Calu3 (cell line): ENCODE measurements at regions of chr3 and their contacts with region 1.

Region 1: GRCh38 chr3:20683910-20684309 is 497.9 kb upstream of the SGO1 start:
- DNase-seq: no peak
- H3K4me3 Mint-ChIP-seq: no peak overlapping the region
- H3K27ac Mint-ChIP-seq: no peak overlapping the region
- H3K4me1 Mint-ChIP-seq: peaks cover 40% of the 10 kb centered on the region
- H3K27me3 Mint-ChIP-seq: no peaks in the 10 kb centered on the region
- CTCF ChIP-seq: no peak

Region 2: GRCh38 chr3:19735111-19735510 is 948.8 kb before region 1 on chr3:
- CTCF ChIA-PET with region 1: no interaction called
- intact Hi-C with region 1: no loop called
- DNase-seq: no peak
- H3K4me3 Mint-ChIP-seq: no peak overlapping the region
- H3K27ac Mint-ChIP-seq: peak overlapping the region; percentile 5
- H3K4me1 Mint-ChIP-seq: peaks cover 21% of the 10 kb centered on the region
- H3K27me3 Mint-ChIP-seq: no peaks in the 10 kb centered on the region
- CTCF ChIP-seq: no peak

Region 3: GRCh38 chr3:20924646-20925385 is 240.9 kb after region 1 on chr3:
- CTCF ChIA-PET with region 1: no interaction called
- intact Hi-C with region 1: loop called (anchors 10 kb)
- DNase-seq: peak; percentile 16
- H3K4me3 Mint-ChIP-seq: peak overlapping the region; percentile 28
- H3K27ac Mint-ChIP-seq: peak overlapping the region; percentile 64
- H3K4me1 Mint-ChIP-seq: peaks cover 40% of the 10 kb centered on the region
- H3K27me3 Mint-ChIP-seq: no peaks in the 10 kb centered on the region
- CTCF ChIP-seq: no peak